ENCODE measurements at regions of chr21 and their contacts with region 1.

Region 1: GRCh38 chr21:45448810-45449657 is 44.1 kb downstream of the COL18A1 start:
- DNase-seq: peak; percentile 15 to 44
- ATAC-seq: no peak
- H3K4me3 ChIP-seq: no peak overlapping the region
- H3K27ac ChIP-seq: no peak overlapping the region
- H3K4me1 ChIP-seq: no peaks in the 10 kb centered on the region
- H3K27me3 ChIP-seq: peaks cover 0 to 26% (median 2%) of the 10 kb centered on the region in 3 donors
- CTCF ChIP-seq: no peak

Region 2: DNA sequence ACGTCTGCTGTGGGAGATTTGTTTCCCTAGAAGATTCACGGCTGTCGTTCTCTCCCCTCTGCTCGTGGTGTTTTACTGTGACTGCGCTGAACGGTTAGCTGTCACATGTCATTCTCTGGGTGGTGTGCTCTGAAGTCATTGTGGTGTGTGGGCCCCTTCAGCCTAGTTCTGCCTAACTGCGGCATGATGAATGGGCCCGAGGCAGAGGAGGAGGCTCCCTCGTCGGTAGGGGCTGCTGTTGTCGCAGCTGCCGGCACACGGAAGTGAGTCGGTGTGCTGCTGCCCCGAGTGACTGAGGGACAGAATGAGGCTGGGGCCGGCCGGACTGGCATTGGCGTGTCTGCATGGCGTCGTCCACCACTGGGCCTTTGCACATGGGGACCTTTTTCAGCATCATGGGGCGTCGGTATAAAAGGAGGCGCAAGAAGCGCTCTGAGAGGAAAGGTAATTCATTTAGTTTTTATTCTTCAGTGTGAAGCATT is 296.7 kb before region 1 on chr21:
- intact Hi-C with region 1: loop called in 1 of 2 experiments (anchors 5 kb)
- DNase-seq: peak in 1 of 2 donors; percentile 46
- ATAC-seq: peak; percentile 57 to 86 (median 70)
- H3K4me3 ChIP-seq: no peak overlapping the region
- H3K27ac ChIP-seq: no peak overlapping the region
- H3K4me1 ChIP-seq: peaks cover 5% of the 10 kb centered on the region
- H3K27me3 ChIP-seq: no peaks in the 10 kb centered on the region
- CTCF ChIP-seq: peak; percentile 22

Region 3: GRCh38 chr21:45643996-45644906 is 195.2 kb after region 1 on chr21:
- intact Hi-C with region 1: no loop called
- DNase-seq: no peak
- ATAC-seq: no peak
- H3K4me3 ChIP-seq: peak overlapping the region; percentile 53
- H3K27ac ChIP-seq: no peak overlapping the region
- H3K4me1 ChIP-seq: peaks cover 4% of the 10 kb centered on the region
- H3K27me3 ChIP-seq: peaks cover 0 to 79% (median 24%) of the 10 kb centered on the region in 3 donors
- CTCF ChIP-seq: no peak

Measured in psoas muscle (tissue), 8 donors.